B cell (primary cell): ENCODE measurements at regions of chr1 and their contacts with region 1.

Region 1: GRCh38 chr1:145688328-145688727 is 18.8 kb downstream of the PDZK1 start:
- DNase-seq: no peak
- ATAC-seq: no peak
- H3K4me3 ChIP-seq: no peak overlapping the region
- H3K4me3 Mint-ChIP-seq: no peak overlapping the region
- H3K27ac ChIP-seq: no peak overlapping the region
- H3K27ac Mint-ChIP-seq: no peak overlapping the region
- H3K4me1 ChIP-seq: peaks cover 7 to 13% of the 10 kb centered on the region in 2 donors
- H3K4me1 Mint-ChIP-seq: peaks cover 11% of the 10 kb centered on the region
- H3K27me3 ChIP-seq: no peaks in the 10 kb centered on the region
- H3K27me3 Mint-ChIP-seq: peaks cover 3% of the 10 kb centered on the region
- CTCF ChIP-seq: no peak

Region 2: DNA sequence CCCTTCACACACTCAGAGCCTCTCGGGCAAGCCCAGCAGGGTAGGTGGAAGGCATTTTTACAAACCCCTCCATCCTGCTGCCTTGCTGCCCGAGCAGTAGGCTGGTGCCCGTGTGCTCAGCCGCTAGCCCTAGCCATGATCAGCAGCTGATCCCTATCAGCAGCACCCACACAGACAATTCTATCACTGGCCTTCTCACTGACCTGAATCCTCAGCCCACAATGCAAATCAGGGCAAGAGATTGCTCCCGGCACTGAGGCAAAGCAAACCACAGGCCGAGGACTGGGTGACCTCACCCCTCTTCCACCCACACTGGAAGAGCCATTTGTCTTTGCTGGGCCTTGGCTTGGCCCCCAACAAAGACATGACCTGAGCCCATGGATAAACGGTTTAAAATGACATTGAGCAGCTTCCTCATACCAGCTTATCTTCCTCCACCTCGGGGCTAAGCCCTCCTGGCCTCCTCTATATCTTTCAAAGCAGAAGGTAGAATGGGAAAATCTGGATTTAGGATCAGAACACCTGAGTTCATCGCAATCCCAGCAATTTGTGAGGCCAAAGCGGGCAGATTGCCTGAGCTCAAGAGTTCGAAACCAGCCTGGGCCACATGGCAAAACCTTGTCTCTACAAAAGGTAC is 19.9 kb after region 1 on chr1:
- CTCF ChIA-PET with region 1: no interaction called
- POLR2A ChIA-PET with region 1: no interaction called
- intact Hi-C with region 1: no loop called
- DNase-seq: no peak
- ATAC-seq: no peak
- H3K4me3 ChIP-seq: no peak overlapping the region
- H3K4me3 Mint-ChIP-seq: no peak overlapping the region
- H3K27ac ChIP-seq: no peak overlapping the region
- H3K27ac Mint-ChIP-seq: no peak overlapping the region
- H3K4me1 ChIP-seq: no peaks in the 10 kb centered on the region
- H3K4me1 Mint-ChIP-seq: no peaks in the 10 kb centered on the region
- H3K27me3 ChIP-seq: no peaks in the 10 kb centered on the region
- H3K27me3 Mint-ChIP-seq: peaks cover 4% of the 10 kb centered on the region
- CTCF ChIP-seq: no peak

Region 3: GRCh38 chr1:145751491-145752037 is 63.2 kb after region 1 on chr1:
- CTCF ChIA-PET with region 1: no interaction called
- POLR2A ChIA-PET with region 1: no interaction called
- intact Hi-C with region 1: no loop called
- DNase-seq: no peak
- ATAC-seq: no peak
- H3K4me3 ChIP-seq: no peak overlapping the region
- H3K4me3 Mint-ChIP-seq: no peak overlapping the region
- H3K27ac ChIP-seq: no peak overlapping the region
- H3K27ac Mint-ChIP-seq: no peak overlapping the region
- H3K4me1 ChIP-seq: no peaks in the 10 kb centered on the region
- H3K4me1 Mint-ChIP-seq: no peaks in the 10 kb centered on the region
- H3K27me3 ChIP-seq: no peaks in the 10 kb centered on the region
- H3K27me3 Mint-ChIP-seq: no peaks in the 10 kb centered on the region
- CTCF ChIP-seq: no peak

Region 4: GRCh38 chr1:145823565-145824498 is 135.5 kb after region 1 on chr1 and contains the starts of genes POLR3C and RNF115:
- CTCF ChIA-PET with region 1: no interaction called
- POLR2A ChIA-PET with region 1: no interaction called
- intact Hi-C with region 1: no loop called
- DNase-seq: peak; percentile 91
- ATAC-seq: peak; percentile 95
- H3K4me3 ChIP-seq: peak within 1 kb of the TSS; percentile 66 to 97 (median 82)
- H3K4me3 Mint-ChIP-seq: peak within 1 kb of the TSS; percentile 98
- H3K27ac ChIP-seq: peak within 1 kb of the TSS; percentile 61 to 89
- H3K27ac Mint-ChIP-seq: peak within 1 kb of the TSS; percentile 97
- H3K4me1 ChIP-seq: peaks cover 12 to 13% of the 10 kb centered on the region in 2 donors
- H3K4me1 Mint-ChIP-seq: peaks cover 28% of the 10 kb centered on the region
- H3K27me3 ChIP-seq: no peaks in the 10 kb centered on the region
- H3K27me3 Mint-ChIP-seq: no peaks in the 10 kb centered on the region
- CTCF ChIP-seq: no peak
- total RNA-seq, gene POLR3C: 48.0 and 49.3 TPM in 2 replicates
- total RNA-seq, gene RNF115: 19.8 and 21.7 TPM in 2 replicates

Region 5: DNA sequence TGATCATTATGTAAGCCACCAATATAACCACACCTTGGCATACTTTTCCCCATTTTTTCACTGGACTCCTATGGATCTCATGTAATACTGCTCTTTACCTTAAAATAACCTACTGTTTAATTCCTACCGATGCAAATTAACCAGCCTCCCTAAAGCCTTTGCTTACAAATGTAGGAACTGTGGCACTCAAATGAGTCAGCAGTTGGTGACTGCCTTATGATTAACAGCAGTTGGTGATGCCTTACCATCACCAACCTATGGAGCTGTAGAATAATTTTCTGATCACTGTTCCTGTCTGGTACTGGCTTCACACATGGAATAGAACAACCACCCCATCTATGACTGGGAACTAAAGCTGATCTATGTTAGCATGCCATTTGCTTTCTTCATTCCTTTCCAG is 149.3 kb after region 1 on chr1:
- CTCF ChIA-PET with region 1: no interaction called
- POLR2A ChIA-PET with region 1: interaction called, 11 read pairs
- intact Hi-C with region 1: no loop called
- DNase-seq: no peak
- ATAC-seq: no peak
- H3K4me3 ChIP-seq: no peak overlapping the region
- H3K4me3 Mint-ChIP-seq: no peak overlapping the region
- H3K27ac ChIP-seq: no peak overlapping the region
- H3K27ac Mint-ChIP-seq: no peak overlapping the region
- H3K4me1 ChIP-seq: no peaks in the 10 kb centered on the region
- H3K4me1 Mint-ChIP-seq: no peaks in the 10 kb centered on the region
- H3K27me3 ChIP-seq: no peaks in the 10 kb centered on the region
- H3K27me3 Mint-ChIP-seq: no peaks in the 10 kb centered on the region
- CTCF ChIP-seq: no peak